PC-3 (cell line): ENCODE measurements at regions of chr12 and their contacts with region 1.

Region 1: DNA sequence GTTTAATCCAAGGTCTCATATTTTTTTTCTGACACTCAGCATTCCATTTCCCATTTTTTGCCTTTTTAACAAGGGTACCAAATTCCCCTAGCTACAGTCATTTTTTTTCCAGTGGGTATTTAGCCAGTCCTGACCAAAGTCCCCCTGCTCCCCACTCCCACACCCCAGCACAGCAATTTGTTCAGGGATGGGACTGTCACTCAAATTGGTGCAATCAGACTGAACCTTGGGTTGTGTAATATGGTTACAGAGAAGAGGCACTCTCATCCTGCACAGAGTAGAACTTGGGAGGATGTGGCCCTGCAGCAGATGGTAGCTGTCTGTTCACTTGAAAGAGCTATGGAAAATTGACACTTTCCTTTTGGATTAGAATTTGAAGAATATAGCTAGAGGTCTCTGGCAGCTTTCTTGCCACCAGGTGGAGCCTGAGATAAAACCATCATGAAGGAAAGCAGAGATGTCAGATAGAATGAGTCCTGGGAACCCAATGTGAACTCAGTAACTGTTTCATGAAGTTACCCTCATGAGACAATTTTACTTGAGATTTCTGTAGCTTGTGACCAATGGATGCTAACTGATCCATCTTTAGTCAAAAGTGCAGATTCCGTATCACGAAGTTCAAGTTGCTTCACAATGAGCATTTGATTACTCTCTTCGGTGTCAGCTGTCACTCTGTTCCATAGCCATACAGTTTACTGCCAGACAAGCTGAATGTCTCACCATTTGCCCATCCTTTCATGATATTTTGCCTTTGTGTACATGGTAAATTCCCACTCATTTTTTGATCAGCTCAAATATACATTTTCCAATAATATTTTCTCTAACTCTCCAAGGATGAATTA is 394.0 kb upstream of the SYT1 start:
- DNase-seq: peak; percentile 64
- ATAC-seq: peak; percentile 80
- H3K4me3 ChIP-seq: no peak overlapping the region
- H3K27ac ChIP-seq: no peak overlapping the region
- H3K4me1 ChIP-seq: no peaks in the 10 kb centered on the region
- H3K27me3 ChIP-seq: no peaks in the 10 kb centered on the region
- CTCF ChIP-seq: peak; percentile 81

Region 2: DNA sequence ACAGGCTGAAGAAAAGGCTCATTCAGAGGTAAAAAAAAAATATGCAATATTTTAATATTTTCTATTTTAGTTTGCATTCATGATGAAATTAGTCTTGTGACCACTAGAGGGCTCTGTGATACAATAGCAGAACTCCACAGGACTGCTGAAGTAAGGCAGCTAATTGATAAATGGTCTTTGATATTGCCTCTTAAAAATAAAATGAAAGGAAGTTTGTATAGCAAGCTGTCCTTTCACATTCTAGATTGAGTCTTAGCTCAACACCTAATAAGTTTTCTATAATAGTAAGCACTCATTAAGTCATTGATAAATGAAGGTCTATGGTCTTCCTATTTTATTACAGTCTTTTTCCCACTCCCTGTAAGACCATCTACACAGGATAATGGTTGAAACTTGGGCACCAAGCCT is 324.2 kb before region 1 on chr12:
- CTCF ChIA-PET with region 1: no interaction called
- POLR2A ChIA-PET with region 1: no interaction called
- intact Hi-C with region 1: no loop called
- DNase-seq: peak; percentile 47
- ATAC-seq: no peak
- H3K4me3 ChIP-seq: no peak overlapping the region
- H3K27ac ChIP-seq: no peak overlapping the region
- H3K4me1 ChIP-seq: no peaks in the 10 kb centered on the region
- H3K27me3 ChIP-seq: no peaks in the 10 kb centered on the region
- CTCF ChIP-seq: peak; percentile 74

Region 3: DNA sequence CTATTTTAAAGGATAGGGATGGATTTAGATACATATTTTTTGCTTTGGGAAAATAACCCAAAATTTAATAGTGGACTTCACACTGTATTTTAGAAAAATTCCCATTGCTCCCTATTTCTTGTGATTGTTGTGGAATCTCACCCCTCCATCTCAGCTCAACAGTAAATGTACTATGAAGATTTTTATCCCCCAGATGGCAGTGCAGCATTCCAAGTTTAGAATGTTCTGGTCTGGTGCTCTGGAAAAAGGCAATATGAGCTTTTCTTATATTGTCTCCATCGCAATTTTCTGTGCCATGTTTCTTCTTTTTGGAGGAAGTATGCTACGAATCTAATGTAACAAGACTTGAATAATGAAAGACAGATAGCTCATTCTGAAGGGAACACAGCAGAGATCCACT is 77.7 kb before region 1 on chr12:
- CTCF ChIA-PET with region 1: interaction called, 14 read pairs
- POLR2A ChIA-PET with region 1: no interaction called
- intact Hi-C with region 1: no loop called
- DNase-seq: peak; percentile 56
- ATAC-seq: peak; percentile 62; the same call in 1 of the 2 replicates
- H3K4me3 ChIP-seq: no peak overlapping the region
- H3K27ac ChIP-seq: no peak overlapping the region
- H3K4me1 ChIP-seq: 0 out of 2 replicates have a peak, but pooled peaks cover under 1% of the 10 kb centered on the region
- H3K27me3 ChIP-seq: no peaks in the 10 kb centered on the region
- CTCF ChIP-seq: peak; percentile 63

Region 4: GRCh38 chr12:78641837-78642423 is 171.4 kb after region 1 on chr12:
- CTCF ChIA-PET with region 1: no interaction called
- POLR2A ChIA-PET with region 1: no interaction called
- intact Hi-C with region 1: loop called (anchors 10 kb)
- DNase-seq: peak; percentile 40
- ATAC-seq: peak; percentile 83
- H3K4me3 ChIP-seq: no peak overlapping the region
- H3K27ac ChIP-seq: no peak overlapping the region
- H3K4me1 ChIP-seq: no peaks in the 10 kb centered on the region
- H3K27me3 ChIP-seq: no peaks in the 10 kb centered on the region
- CTCF ChIP-seq: peak; percentile 48; the same call in 1 of the 2 replicates

Region 5: DNA sequence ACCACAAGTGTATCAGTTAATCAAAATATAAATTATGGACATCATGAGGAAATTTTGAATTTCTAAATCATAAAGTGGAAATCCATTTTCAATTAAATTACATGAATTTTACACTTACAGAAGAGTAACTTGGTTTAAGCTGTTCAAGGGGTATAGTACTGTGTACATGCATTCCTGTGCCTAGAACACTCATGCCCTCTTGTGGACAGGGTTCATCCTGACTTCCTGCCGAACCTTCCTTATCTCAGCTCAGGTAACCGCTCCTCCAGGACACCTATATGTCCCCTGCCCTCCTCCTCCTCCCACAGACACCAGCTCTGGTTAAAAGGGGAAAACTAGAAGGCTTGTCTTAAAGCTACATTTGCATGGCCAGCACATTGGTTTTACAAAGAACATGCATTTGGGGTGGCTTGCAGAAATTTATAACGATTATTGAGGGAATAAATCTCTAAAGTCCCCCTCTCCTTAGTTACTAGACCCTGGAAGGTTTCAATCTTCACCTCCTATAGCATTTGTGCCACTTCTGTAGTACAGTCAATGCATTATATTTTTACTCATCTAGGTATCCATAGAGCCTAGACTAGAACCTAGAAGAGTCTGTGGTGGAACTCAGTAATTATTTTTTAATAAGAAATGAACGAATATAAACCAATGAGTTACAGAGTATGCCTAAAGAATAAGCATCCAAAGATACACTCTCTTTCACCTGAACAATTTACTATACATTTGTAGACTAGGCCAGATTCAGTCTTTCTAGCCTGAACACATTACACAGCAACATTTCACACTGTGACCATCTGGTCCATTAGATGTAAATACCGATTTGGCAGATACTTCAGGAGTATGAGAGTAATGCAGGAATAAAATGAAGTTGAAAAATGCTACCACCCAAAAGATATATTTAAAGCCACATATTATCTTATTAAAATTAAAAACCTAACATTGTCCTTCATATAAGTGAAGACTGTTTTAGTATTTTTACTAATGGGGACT is 874.6 kb after region 1 on chr12:
- CTCF ChIA-PET with region 1: interaction called, 3 read pairs
- POLR2A ChIA-PET with region 1: no interaction called
- intact Hi-C with region 1: loop called (anchors 5 kb)
- DNase-seq: peak; percentile 77
- ATAC-seq: peak; percentile 99
- H3K4me3 ChIP-seq: no peak overlapping the region
- H3K27ac ChIP-seq: no peak overlapping the region
- H3K4me1 ChIP-seq: no peaks in the 10 kb centered on the region
- H3K27me3 ChIP-seq: peaks cover 4% of the 10 kb centered on the region; the same call in 1 of the 2 replicates
- CTCF ChIP-seq: peak; percentile 91